GM12878 (cell line): ENCODE measurements at regions of chr19 and their contacts with region 1.

Region 1: GRCh38 chr19:51514866-51515481 is 13.4 kb upstream of the SIGLEC12 start:
- DNase-seq: peak; percentile 31
- ATAC-seq: peak; percentile 76
- H3K4me3 ChIP-seq: no peak overlapping the region
- H3K27ac ChIP-seq: no peak overlapping the region
- H3K4me1 ChIP-seq: no peaks in the 10 kb centered on the region
- H3K27me3 ChIP-seq: peaks cover 0 to 7% of the 10 kb centered on the region in 2 experiments; a peak in 1 of 4 replicates
- CTCF ChIP-seq: peak; percentile 72 to 84 (median 75)
- EP300 ChIP-seq: no peak
- POLR2A ChIP-seq: no peak
- RAD21 ChIP-seq: peak; percentile 58

Region 2: GRCh38 chr19:51473009-51473707 is 41.8 kb before region 1 on chr19:
- CTCF ChIA-PET with region 1: interaction called, 46 read pairs
- POLR2A ChIA-PET with region 1: no interaction called
- RAD21 ChIA-PET with region 1: interaction called, 3 read pairs
- SMC1A ChIA-PET with region 1: interaction called, 3 read pairs
- in situ Hi-C with region 1: no loop called
- intact Hi-C with region 1: loop called (anchors 5 kb)
- DNase-seq: peak; percentile 15
- ATAC-seq: peak; percentile 91
- H3K4me3 ChIP-seq: no peak overlapping the region
- H3K27ac ChIP-seq: no peak overlapping the region
- H3K4me1 ChIP-seq: no peaks in the 10 kb centered on the region
- H3K27me3 ChIP-seq: no peaks in the 10 kb centered on the region; a peak in 1 of 4 replicates
- CTCF ChIP-seq: peak; percentile 65 to 93 (median 86)
- EP300 ChIP-seq: no peak
- POLR2A ChIP-seq: no peak
- RAD21 ChIP-seq: peak; percentile 92

Region 3: DNA sequence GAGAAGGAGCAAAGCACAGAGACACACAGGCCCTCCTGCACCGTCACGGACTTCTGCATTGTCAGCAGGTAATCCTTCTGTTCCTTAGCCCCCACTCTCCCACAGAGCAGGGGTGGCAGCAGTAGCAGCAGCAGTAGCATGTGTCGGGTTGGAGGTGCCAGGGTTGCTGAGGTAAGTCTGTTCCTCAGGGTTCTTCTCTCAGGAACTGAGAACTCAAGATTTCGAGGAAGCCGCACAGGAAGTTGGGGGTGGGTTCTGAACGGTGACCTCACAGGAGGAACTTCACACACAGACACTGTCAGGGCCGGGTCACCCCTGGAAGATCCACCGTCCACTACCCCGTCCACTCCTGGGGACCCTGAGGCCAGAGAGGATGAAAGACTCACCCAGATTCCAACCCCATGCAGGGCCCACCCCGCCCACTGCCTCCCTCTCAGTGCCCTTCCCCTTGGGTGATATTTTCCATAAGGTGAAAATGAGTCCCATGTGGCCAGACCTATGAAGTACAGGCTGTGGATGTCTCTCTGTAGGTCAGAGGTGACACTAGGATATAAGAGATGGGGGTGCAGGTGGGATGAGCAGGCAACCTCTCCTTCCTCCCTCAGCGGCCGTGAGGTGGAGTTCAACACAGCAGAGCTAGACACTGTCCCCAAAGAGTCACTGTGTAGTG is 13.2 kb before region 1 on chr19 and contains the start of gene SIGLEC12:
- CTCF ChIA-PET with region 1: interaction called, 39 read pairs
- POLR2A ChIA-PET with region 1: no interaction called
- RAD21 ChIA-PET with region 1: no interaction called
- SMC1A ChIA-PET with region 1: no interaction called
- in situ Hi-C with region 1: no loop called
- intact Hi-C with region 1: no loop called
- DNase-seq: no peak
- ATAC-seq: no peak
- H3K4me3 ChIP-seq: no peak within 1 kb of the TSS
- H3K27ac ChIP-seq: no peak within 1 kb of the TSS
- H3K4me1 ChIP-seq: peaks cover 4% of the 10 kb centered on the region; the same call in 1 of the 2 replicates
- H3K27me3 ChIP-seq: 0 out of 4 replicates have a peak, but pooled peaks cover 0 to 2% of the 10 kb centered on the region in 2 experiments
- CTCF ChIP-seq: no peak
- EP300 ChIP-seq: no peak
- POLR2A ChIP-seq: no peak
- RAD21 ChIP-seq: no peak
- polyA plus RNA-seq, gene SIGLEC12: not detected

Region 4: GRCh38 chr19:51531349-51532315 is 16.7 kb after region 1 on chr19 and contains the start of gene SIGLEC6:
- CTCF ChIA-PET with region 1: interaction called, 22 read pairs
- POLR2A ChIA-PET with region 1: no interaction called
- RAD21 ChIA-PET with region 1: no interaction called
- SMC1A ChIA-PET with region 1: interaction called, 4 read pairs
- in situ Hi-C with region 1: no loop called
- intact Hi-C with region 1: no loop called
- DNase-seq: peak; percentile 25
- ATAC-seq: peak; percentile 97
- H3K4me3 ChIP-seq: peak within 1 kb of the TSS; percentile 49; the same call in 1 of the 2 replicates
- H3K27ac ChIP-seq: no peak within 1 kb of the TSS
- H3K4me1 ChIP-seq: peaks cover 11% of the 10 kb centered on the region
- H3K27me3 ChIP-seq: no peaks in the 10 kb centered on the region
- CTCF ChIP-seq: no peak
- EP300 ChIP-seq: peak; percentile 31 to 53; a peak in 2 of 4 replicates
- POLR2A ChIP-seq: no peak
- RAD21 ChIP-seq: no peak
- polyA plus RNA-seq, gene SIGLEC6: 0.13 TPM in 1 of 2 experiments, not detected in the other

Region 5: GRCh38 chr19:51539821-51540366 is 24.9 kb after region 1 on chr19:
- CTCF ChIA-PET with region 1: interaction called, 11 read pairs
- POLR2A ChIA-PET with region 1: no interaction called
- RAD21 ChIA-PET with region 1: no interaction called
- SMC1A ChIA-PET with region 1: no interaction called
- in situ Hi-C with region 1: no loop called
- intact Hi-C with region 1: no loop called
- DNase-seq: no peak
- ATAC-seq: no peak
- H3K4me3 ChIP-seq: no peak overlapping the region
- H3K27ac ChIP-seq: no peak overlapping the region
- H3K4me1 ChIP-seq: no peaks in the 10 kb centered on the region; the same call in 1 of the 2 replicates
- H3K27me3 ChIP-seq: no peaks in the 10 kb centered on the region
- CTCF ChIP-seq: no peak
- EP300 ChIP-seq: no peak
- POLR2A ChIP-seq: no peak
- RAD21 ChIP-seq: no peak

Region 6: DNA sequence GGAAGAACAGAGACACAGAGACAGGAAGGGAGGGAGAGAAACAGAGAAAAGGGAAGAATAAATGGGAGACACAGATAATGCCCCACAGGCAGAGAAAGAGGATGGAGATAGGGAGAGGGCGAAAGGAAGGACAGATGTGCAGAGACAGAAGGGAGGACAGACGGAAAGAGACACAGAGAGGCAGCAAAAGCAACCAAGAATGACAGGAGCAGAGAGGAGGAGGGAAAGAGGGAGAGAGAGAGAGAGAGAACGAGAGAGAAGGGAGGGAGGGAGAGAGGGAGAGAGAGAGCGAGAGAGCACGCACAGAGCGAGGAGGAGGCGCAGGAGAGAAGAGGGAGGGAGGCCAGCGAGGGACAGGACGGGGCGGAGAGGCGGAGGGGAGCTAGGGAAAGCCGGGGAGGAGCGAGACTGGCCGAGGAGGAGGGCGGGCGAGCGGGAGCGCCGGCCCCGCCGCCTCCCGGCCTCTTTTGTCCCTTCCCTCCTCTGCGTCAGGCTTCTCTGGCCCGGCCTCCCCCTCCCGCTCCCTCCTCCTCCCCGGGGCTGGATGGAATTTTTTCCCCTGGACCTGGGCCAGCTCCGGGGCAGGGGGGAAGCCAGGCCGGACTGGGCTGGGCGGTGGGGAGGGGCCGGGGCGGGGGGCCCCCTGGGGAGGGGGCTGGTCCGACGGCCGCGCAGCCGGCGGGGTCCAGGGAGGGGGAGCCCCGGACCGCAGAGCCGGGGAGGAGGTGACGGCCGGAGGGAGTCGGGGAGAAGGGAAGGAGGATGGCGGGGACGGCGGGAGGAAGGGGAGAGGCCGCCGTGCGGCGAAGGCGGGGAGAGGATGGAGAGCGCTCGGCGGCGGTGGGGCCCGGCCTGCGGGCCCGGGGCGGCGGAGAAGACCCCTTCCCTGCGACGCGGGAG is 173.9 kb after region 1 on chr19:
- CTCF ChIA-PET with region 1: no interaction called
- POLR2A ChIA-PET with region 1: no interaction called
- RAD21 ChIA-PET with region 1: no interaction called
- SMC1A ChIA-PET with region 1: no interaction called
- in situ Hi-C with region 1: no loop called
- intact Hi-C with region 1: no loop called
- DNase-seq: no peak
- ATAC-seq: no peak
- H3K4me3 ChIP-seq: no peak overlapping the region
- H3K27ac ChIP-seq: no peak overlapping the region
- H3K4me1 ChIP-seq: no peaks in the 10 kb centered on the region
- H3K27me3 ChIP-seq: peaks cover 3 to 9% of the 10 kb centered on the region in 2 experiments
- CTCF ChIP-seq: no peak
- EP300 ChIP-seq: no peak
- POLR2A ChIP-seq: no peak
- RAD21 ChIP-seq: no peak